RWPE1 (cell line): ENCODE measurements at regions of chr9 and their contacts with region 1.

Region 1: DNA sequence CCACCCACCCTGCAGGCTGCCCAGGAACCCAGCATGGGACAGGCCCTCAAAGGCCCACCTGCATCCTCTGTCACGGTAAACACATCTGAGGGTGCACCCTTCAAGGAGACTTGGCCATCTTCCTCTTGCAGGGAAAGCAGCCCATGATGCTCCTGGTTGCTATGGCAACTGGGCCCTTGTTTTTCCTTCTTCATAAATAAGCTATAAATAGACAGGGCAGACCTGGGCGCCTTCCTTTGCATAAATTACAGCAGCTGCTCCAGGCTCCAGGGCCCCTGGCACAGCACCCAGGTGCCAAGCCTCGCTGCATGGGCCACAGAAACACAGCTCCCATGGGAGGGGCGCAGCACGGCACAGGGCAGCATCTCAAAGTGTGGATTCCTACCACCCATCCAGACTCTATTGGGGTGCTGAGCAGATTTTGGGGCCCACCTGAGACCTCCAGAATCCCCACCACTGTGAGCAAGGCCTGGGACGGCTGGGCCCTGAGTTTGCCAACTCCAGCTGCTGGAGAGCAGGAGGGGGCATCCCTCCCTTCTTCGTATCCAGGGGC is 5.8 kb upstream of the PSMB7 start:
- DNase-seq: no peak
- H3K27ac ChIP-seq: no peak overlapping the region
- CTCF ChIP-seq: no peak

Region 2: GRCh38 chr9:124222918-124223720 is 197.9 kb before region 1 on chr9:
- CTCF ChIA-PET with region 1: no interaction called
- POLR2A ChIA-PET with region 1: no interaction called
- DNase-seq: peak; percentile 45
- H3K27ac ChIP-seq: 0 out of 2 replicates have a peak overlapping the region, but pooled peaks have one; percentile 4
- CTCF ChIP-seq: no peak

Region 3: GRCh38 chr9:124500796-124501611 is 79.9 kb after region 1 on chr9:
- CTCF ChIA-PET with region 1: interaction called, 10 read pairs
- POLR2A ChIA-PET with region 1: no interaction called
- DNase-seq: no peak
- H3K27ac ChIP-seq: no peak overlapping the region
- CTCF ChIP-seq: no peak